Mammary epithelial cell (primary cell): ENCODE measurements at regions of chr3 and their contacts with region 1.

Region 1: DNA sequence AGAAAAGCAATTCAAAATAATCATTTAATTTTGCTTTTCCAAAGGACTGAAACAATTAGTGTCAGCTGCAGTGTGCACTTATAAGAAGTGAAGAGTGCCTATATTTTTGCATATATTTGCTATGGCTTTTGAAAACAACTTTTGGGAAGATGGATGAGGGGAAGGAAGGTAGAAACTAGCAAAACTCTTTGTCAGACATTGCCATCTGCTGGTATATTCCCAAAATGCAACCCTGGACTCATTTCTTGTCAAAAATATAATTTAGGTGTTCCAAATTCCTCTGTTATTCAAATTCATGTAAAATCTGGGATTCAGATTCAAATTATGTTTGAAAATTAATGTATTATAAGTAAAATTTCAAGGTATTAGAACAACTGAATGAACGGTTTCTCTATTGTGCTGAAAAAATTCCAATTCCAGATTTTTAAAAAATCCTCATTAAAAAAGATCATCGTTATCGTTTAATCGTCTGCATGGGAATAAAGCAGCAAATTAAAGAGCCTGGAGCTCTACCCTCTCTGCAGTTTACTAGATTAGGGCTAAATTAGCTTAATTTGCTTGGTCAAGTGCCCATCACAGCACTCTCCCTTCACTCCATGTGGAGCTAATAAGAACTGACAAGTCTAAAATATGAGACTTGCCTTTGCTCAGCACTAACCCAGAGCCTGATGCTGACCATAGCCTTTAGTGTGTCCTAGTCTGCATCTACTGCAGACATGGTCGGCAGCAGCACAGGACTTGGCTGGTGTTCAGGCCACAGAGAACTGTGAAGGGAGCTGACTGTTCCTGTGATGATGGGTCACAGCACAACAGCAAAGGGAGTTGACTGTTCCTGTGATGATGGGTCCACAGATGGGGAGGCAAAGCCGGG is 67.9 kb upstream of the MITF start:
- DNase-seq: peak; percentile 27
- H3K4me3 ChIP-seq: no peak overlapping the region
- H3K27ac ChIP-seq: no peak overlapping the region
- H3K4me1 ChIP-seq: no peaks in the 10 kb centered on the region
- H3K27me3 ChIP-seq: no peaks in the 10 kb centered on the region
- CTCF ChIP-seq: peak; percentile 71 to 84

Region 2: DNA sequence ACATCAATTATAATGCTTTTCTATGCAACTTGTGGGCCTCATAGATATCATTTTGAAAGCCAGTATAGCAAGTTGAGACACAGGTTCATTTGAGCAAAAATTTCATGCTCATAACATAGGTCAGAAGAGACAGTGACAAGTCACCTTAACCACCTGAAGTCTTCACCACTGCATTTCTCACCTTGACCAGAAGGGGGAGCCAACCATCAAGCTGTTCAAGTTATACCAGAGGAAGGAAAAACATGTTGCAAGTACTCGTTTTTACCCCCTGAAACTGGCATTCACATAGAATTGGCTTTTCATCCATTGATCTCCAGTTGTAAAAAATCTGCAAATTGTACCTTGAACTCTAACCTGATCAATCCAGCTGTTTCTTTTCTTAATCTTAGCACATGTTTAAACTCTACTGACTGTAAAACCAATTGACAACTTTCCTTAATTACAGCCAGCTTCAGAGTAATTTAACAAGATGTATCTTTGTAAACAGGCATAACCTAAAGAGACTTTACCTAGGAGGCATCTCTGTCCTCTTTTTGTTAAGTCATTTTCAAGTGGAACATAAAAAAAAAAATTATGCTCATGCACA is 550.3 kb before region 1 on chr3:
- CTCF ChIA-PET with region 1: no interaction called
- dilution Hi-C with region 1: no loop called
- in situ Hi-C with region 1: no loop called
- intact Hi-C with region 1: loop called (anchors 1 kb)
- DNase-seq: peak; percentile 67
- H3K4me3 ChIP-seq: no peak overlapping the region
- H3K27ac ChIP-seq: no peak overlapping the region
- H3K4me1 ChIP-seq: peaks cover 12% of the 10 kb centered on the region
- H3K27me3 ChIP-seq: no peaks in the 10 kb centered on the region
- CTCF ChIP-seq: peak; percentile 96 to 99

Region 3: GRCh38 chr3:69306239-69307185 is 364.8 kb before region 1 on chr3:
- CTCF ChIA-PET with region 1: no interaction called
- dilution Hi-C with region 1: loop called (anchors 25 kb)
- in situ Hi-C with region 1: loop called in 1 of 2 experiments (anchors 25 kb)
- intact Hi-C with region 1: loop called (anchors 2 kb)
- DNase-seq: peak; percentile 89
- H3K4me3 ChIP-seq: no peak overlapping the region
- H3K27ac ChIP-seq: peak overlapping the region; percentile 47
- H3K4me1 ChIP-seq: peaks cover 3% of the 10 kb centered on the region
- H3K27me3 ChIP-seq: no peaks in the 10 kb centered on the region
- CTCF ChIP-seq: peak; percentile 91 to 94

Region 4: DNA sequence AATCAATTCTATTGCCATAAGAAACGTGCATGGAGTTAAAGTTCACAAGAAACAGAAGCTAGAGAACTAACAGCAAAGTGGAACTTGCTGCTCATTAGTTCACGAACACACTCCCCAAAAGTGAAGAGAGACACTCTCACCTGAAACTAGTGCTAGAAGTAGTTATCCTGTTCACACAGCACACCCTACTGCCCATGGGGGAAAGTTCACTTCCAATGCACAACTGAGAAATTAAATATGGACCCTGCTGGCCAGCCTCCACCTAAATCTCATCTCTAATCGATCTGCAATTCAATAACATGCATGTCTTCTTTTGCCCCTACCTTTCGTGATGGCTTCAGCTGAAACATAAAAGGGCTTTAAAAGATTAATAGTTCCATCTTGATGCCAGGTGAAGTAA is 246.1 kb before region 1 on chr3:
- CTCF ChIA-PET with region 1: no interaction called
- dilution Hi-C with region 1: no loop called
- in situ Hi-C with region 1: loop called in 1 of 2 experiments (anchors 25 kb)
- intact Hi-C with region 1: loop called (anchors 5 kb)
- DNase-seq: peak; percentile 37
- H3K4me3 ChIP-seq: no peak overlapping the region
- H3K27ac ChIP-seq: no peak overlapping the region
- H3K4me1 ChIP-seq: peaks cover 36% of the 10 kb centered on the region
- H3K27me3 ChIP-seq: no peaks in the 10 kb centered on the region
- CTCF ChIP-seq: peak; percentile 67 to 73

Region 5: DNA sequence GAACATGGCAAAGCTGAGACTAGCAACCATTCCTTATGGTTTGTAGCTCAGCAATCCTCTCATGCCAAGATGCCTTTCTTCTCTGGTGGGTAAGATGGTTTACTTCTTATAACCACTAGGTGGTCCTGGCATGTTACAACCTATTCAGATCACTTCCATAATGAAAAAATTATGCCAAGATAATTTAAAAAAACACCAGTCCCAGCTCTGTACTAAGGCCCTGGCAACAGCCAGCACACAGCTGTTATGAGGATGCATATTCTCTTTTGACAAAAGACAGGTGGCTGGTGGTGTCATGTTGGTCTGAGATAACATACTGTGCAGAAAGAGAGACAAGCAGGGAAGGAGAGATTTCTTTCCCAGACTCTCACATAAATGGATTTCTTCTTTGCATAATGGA is 219.7 kb before region 1 on chr3:
- CTCF ChIA-PET with region 1: no interaction called
- dilution Hi-C with region 1: no loop called
- in situ Hi-C with region 1: loop called (anchors 25 kb)
- intact Hi-C with region 1: no loop called
- DNase-seq: no peak
- H3K4me3 ChIP-seq: no peak overlapping the region
- H3K27ac ChIP-seq: no peak overlapping the region
- H3K4me1 ChIP-seq: no peaks in the 10 kb centered on the region
- H3K27me3 ChIP-seq: no peaks in the 10 kb centered on the region
- CTCF ChIP-seq: peak; percentile 21 to 23

Region 6: DNA sequence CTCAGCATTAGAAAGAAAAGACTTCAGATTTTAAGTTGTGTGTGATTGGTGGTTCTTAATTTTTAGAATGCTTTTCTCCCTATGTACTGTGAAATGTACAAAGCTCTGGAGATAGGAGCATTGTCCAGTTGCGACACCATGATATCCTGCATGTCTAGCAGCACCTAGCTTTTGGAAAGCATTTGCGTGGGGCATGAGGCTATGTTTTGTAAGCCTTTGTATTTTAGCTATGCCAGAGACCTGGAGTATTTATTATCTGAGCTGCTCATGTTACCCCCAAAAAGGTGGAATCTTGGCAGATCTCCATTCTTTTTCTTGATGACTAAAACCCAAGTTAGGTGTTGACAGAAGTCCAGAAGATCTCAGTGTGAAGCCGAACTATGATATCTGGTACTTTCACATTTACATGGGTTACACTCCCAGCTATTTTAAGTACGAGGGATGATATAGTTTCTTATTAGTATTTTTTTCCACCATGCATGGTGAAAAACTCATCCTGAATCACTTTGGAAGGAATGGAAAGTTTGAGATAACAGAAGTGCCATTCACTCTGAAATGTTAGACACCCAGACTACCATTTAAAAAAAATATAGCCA is 201.6 kb after region 1 on chr3:
- CTCF ChIA-PET with region 1: no interaction called
- dilution Hi-C with region 1: no loop called
- in situ Hi-C with region 1: no loop called
- intact Hi-C with region 1: no loop called
- DNase-seq: no peak
- H3K4me3 ChIP-seq: no peak overlapping the region
- H3K27ac ChIP-seq: no peak overlapping the region
- H3K4me1 ChIP-seq: peaks cover 7% of the 10 kb centered on the region
- H3K27me3 ChIP-seq: no peaks in the 10 kb centered on the region
- CTCF ChIP-seq: no peak

Region 7: DNA sequence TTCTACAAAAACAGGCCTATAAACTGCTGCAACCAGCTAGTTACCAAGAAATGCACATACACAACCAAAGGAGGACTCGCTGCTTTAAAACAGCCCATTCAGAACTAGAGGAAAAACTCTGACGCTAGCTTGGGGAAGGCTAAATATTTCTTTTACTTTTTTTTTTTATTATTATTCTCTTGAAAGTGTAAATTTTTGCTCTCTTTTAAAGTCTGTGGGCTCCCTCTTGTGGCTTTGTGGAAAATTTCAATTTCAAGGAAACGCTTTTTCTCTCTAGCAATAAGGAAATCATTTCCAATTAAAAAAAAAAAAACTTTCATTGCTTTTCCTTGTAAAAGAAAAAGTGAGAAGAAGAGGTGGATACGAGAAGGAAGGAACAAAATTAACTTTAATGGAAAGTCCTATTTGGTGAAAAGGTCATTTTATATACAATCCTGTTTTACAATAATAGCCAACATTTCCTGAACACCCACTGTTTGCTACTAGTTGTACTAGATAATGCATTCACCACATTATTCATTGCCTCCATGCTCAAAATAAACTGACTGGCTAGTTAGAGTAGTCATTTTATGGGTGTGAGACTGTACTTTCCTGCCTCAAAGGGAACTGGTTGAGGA is 277.0 kb after region 1 on chr3:
- CTCF ChIA-PET with region 1: no interaction called
- dilution Hi-C with region 1: loop called (anchors 25 kb)
- in situ Hi-C with region 1: no loop called
- intact Hi-C with region 1: no loop called
- DNase-seq: peak; percentile 9
- H3K4me3 ChIP-seq: no peak overlapping the region
- H3K27ac ChIP-seq: no peak overlapping the region
- H3K4me1 ChIP-seq: no peaks in the 10 kb centered on the region
- H3K27me3 ChIP-seq: no peaks in the 10 kb centered on the region
- CTCF ChIP-seq: peak; percentile 43 to 57